ENCODE measurements at regions of chr1 and their contacts with region 1.

Region 1: DNA sequence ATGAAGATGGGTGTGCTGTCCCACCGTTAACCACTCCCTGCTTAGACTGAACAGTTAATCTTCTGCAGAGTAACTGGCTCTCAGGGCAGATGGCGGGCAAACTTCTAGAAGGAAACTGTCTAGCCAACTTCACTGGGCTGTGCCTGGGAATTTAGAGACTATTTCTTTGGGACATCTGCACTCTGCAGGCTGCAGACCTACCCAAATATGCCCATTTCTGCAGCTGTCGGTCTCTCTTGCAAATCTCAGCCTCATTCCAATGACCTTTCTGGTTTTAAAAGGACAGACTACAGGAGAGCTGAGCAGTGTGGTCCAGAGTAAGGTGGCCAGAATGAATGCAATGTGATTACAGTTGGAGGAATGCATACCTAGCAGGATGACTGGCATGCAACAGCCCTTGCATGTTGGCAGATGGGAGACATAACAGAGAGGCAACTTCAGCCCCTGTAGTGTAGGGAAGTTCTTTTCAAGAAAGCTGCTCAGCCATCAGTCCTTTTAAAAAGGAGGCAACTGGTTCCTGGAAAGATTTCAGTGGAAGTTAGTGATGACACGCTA is 26.3 kb upstream of the IL20 start:
- DNase-seq: no peak
- H3K4me3 Mint-ChIP-seq: no peak overlapping the region
- H3K27ac Mint-ChIP-seq: no peak overlapping the region
- H3K4me1 Mint-ChIP-seq: no peaks in the 10 kb centered on the region
- H3K27me3 Mint-ChIP-seq: peaks cover 96% of the 10 kb centered on the region
- CTCF ChIP-seq: no peak

Region 2: GRCh38 chr1:206856674-206857464 is 17.8 kb after region 1 on chr1:
- CTCF ChIA-PET with region 1: interaction called, 11 read pairs
- intact Hi-C with region 1: no loop called
- DNase-seq: no peak
- H3K4me3 Mint-ChIP-seq: no peak overlapping the region
- H3K27ac Mint-ChIP-seq: no peak overlapping the region
- H3K4me1 Mint-ChIP-seq: peaks cover 5% of the 10 kb centered on the region
- H3K27me3 Mint-ChIP-seq: peaks cover 68% of the 10 kb centered on the region
- CTCF ChIP-seq: peak; percentile 33

Measured in Calu3 (cell line).